Naive thymus-derived CD4-positive, alpha-beta T cell (primary cell): ENCODE measurements at regions of chr4 and their contacts with region 1.

Region 1: GRCh38 chr4:119041951-119042560 is 93.6 kb upstream of the MYOZ2 start:
- DNase-seq: peak in 7 of 9 donors; percentile 30 to 72 (median 61)
- ATAC-seq: peak; percentile 94
- H3K4me3 ChIP-seq: no peak overlapping the region
- H3K4me3 Mint-ChIP-seq: peak overlapping the region in 1 of 10 donors; percentile 25
- H3K27ac ChIP-seq: no peak overlapping the region
- H3K27ac Mint-ChIP-seq: no peak overlapping the region
- H3K4me1 ChIP-seq: no peaks in the 10 kb centered on the region
- H3K4me1 Mint-ChIP-seq: peaks cover 0 to 12% (median 0%) of the 10 kb centered on the region in 7 donors
- H3K27me3 ChIP-seq: no peaks in the 10 kb centered on the region
- H3K27me3 Mint-ChIP-seq: peaks cover 0 to 3% (median 0%) of the 10 kb centered on the region in 5 donors

Region 2: GRCh38 chr4:118676128-118676527 is 365.9 kb before region 1 on chr4:
- CTCF ChIA-PET with region 1: no interaction called
- POLR2A ChIA-PET with region 1: no interaction called
- intact Hi-C with region 1: no loop called
- DNase-seq: no peak
- ATAC-seq: no peak
- H3K4me3 ChIP-seq: no peak overlapping the region
- H3K4me3 Mint-ChIP-seq: no peak overlapping the region
- H3K27ac ChIP-seq: no peak overlapping the region
- H3K27ac Mint-ChIP-seq: no peak overlapping the region
- H3K4me1 ChIP-seq: no peaks in the 10 kb centered on the region
- H3K4me1 Mint-ChIP-seq: no peaks in the 10 kb centered on the region
- H3K27me3 ChIP-seq: no peaks in the 10 kb centered on the region
- H3K27me3 Mint-ChIP-seq: peaks cover 0 to 2% (median 0%) of the 10 kb centered on the region in 5 donors

Region 3: GRCh38 chr4:119490335-119490734 is 448.3 kb after region 1 on chr4:
- CTCF ChIA-PET with region 1: interaction called, 9 read pairs
- POLR2A ChIA-PET with region 1: no interaction called
- intact Hi-C with region 1: loop called (anchors 1 to 10 kb)
- DNase-seq: no peak
- ATAC-seq: no peak
- H3K4me3 ChIP-seq: no peak overlapping the region
- H3K4me3 Mint-ChIP-seq: no peak overlapping the region
- H3K27ac ChIP-seq: no peak overlapping the region
- H3K27ac Mint-ChIP-seq: peak overlapping the region in 1 of 9 donors; percentile 64
- H3K4me1 ChIP-seq: no peaks in the 10 kb centered on the region
- H3K4me1 Mint-ChIP-seq: no peaks in the 10 kb centered on the region
- H3K27me3 ChIP-seq: no peaks in the 10 kb centered on the region
- H3K27me3 Mint-ChIP-seq: no peaks in the 10 kb centered on the region